ENCODE measurements at regions of chr12 and their contacts with region 1.

Region 1: GRCh38 chr12:21607701-21608100 is 3.1 kb upstream of the GYS2 start:
- DNase-seq: no peak
- ATAC-seq: peak in 1 of 2 donors; percentile 56
- H3K4me3 ChIP-seq: no peak overlapping the region
- H3K27ac ChIP-seq: no peak overlapping the region
- H3K4me1 ChIP-seq: no peaks in the 10 kb centered on the region
- H3K27me3 ChIP-seq: no peaks in the 10 kb centered on the region
- CTCF ChIP-seq: peak; percentile 44

Region 2: DNA sequence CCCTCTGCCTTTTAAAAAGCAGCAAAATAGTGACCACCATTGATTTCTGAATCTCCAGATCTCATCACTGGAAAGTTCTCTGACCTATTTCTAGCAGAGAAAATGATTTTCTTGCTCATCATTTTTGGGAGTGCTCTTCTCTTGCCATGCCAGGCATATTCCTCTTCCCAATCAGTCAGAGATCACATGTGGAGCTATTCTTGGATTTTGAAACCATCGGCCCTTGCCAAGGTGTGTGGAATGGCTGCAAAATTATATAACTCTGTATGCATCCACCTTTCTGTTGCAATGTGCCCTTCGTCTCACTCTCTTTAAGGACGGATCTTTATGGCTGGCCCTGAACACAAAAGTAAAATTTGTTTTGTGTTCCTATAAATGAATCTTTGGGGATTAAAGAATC is 75.4 kb after region 1 on chr12:
- intact Hi-C with region 1: loop called (anchors 10 kb)
- DNase-seq: no peak
- ATAC-seq: no peak
- H3K4me3 ChIP-seq: no peak overlapping the region
- H3K27ac ChIP-seq: no peak overlapping the region
- H3K4me1 ChIP-seq: peaks cover 11% of the 10 kb centered on the region
- H3K27me3 ChIP-seq: no peaks in the 10 kb centered on the region
- CTCF ChIP-seq: no peak

Measured in lower lobe of right lung (tissue), 2 donors.